HepG2 (cell line): ENCODE measurements at regions of chr3 and their contacts with region 1.

Region 1: GRCh38 chr3:52238761-52239701 is at the start of gene TWF2:
- DNase-seq: peak; percentile 56
- ATAC-seq: peak; percentile 78
- H3K4me3 ChIP-seq: peak within 1 kb of the TSS; percentile 79 to 100 (median 98)
- H3K27ac ChIP-seq: peak within 1 kb of the TSS; percentile 68
- H3K4me1 ChIP-seq: peaks cover 53% of the 10 kb centered on the region
- H3K27me3 ChIP-seq: no peaks in the 10 kb centered on the region; a peak in 1 of 5 replicates
- CTCF ChIP-seq: peak; percentile 59
- EP300 ChIP-seq: no peak
- POLR2A ChIP-seq: no peak; a peak in 1 of 4 replicates
- RAD21 ChIP-seq: no peak
- total RNA-seq, gene TWF2: 45.5 and 49.1 TPM in 2 replicates

Region 2: GRCh38 chr3:52176951-52177700 is 61.9 kb before region 1 on chr3:
- CTCF ChIA-PET with region 1: no interaction called
- POLR2A ChIA-PET with region 1: interaction called, 12 read pairs
- in situ Hi-C with region 1: no loop called
- intact Hi-C with region 1: no loop called
- DNase-seq: peak; percentile 86
- ATAC-seq: peak; percentile 81
- H3K4me3 ChIP-seq: peak overlapping the region; percentile 43 to 60 (median 48); a peak in 5 of 6 replicates
- H3K27ac ChIP-seq: peak overlapping the region; percentile 85
- H3K4me1 ChIP-seq: peaks cover 64% of the 10 kb centered on the region
- H3K27me3 ChIP-seq: no peaks in the 10 kb centered on the region
- CTCF ChIP-seq: no peak; the same call in none of the 2 replicates
- EP300 ChIP-seq: peak; percentile 27 to 48; a peak in 2 of 4 replicates
- POLR2A ChIP-seq: peak; percentile 25 to 50; a peak in 2 of 4 replicates
- RAD21 ChIP-seq: no peak

Region 3: GRCh38 chr3:52220380-52221026 is 18.5 kb before region 1 on chr3:
- CTCF ChIA-PET with region 1: no interaction called
- POLR2A ChIA-PET with region 1: interaction called, 22 read pairs
- in situ Hi-C with region 1: no loop called
- intact Hi-C with region 1: no loop called
- DNase-seq: peak; percentile 49
- ATAC-seq: peak; percentile 78
- H3K4me3 ChIP-seq: peak overlapping the region in 1 of 3 experiments; percentile 6; a peak in 1 of 6 replicates
- H3K27ac ChIP-seq: no peak overlapping the region
- H3K4me1 ChIP-seq: peaks cover 45% of the 10 kb centered on the region
- H3K27me3 ChIP-seq: peaks cover 1 to 12% of the 10 kb centered on the region in 2 experiments; a peak in 4 of 5 replicates
- CTCF ChIP-seq: peak; percentile 94
- EP300 ChIP-seq: no peak
- POLR2A ChIP-seq: no peak
- RAD21 ChIP-seq: peak; percentile 73

Region 4: GRCh38 chr3:52225452-52226228 is 13.4 kb before region 1 on chr3 and contains the start of gene TLR9:
- CTCF ChIA-PET with region 1: no interaction called
- POLR2A ChIA-PET with region 1: interaction called, 22 read pairs
- in situ Hi-C with region 1: no loop called
- intact Hi-C with region 1: no loop called
- DNase-seq: no peak
- ATAC-seq: peak; percentile 41
- H3K4me3 ChIP-seq: no peak within 1 kb of the TSS; a peak in 1 of 6 replicates
- H3K27ac ChIP-seq: no peak within 1 kb of the TSS
- H3K4me1 ChIP-seq: peaks cover 18% of the 10 kb centered on the region
- H3K27me3 ChIP-seq: peaks cover 1 to 12% of the 10 kb centered on the region in 2 experiments; a peak in 4 of 5 replicates
- CTCF ChIP-seq: no peak
- EP300 ChIP-seq: no peak
- POLR2A ChIP-seq: no peak
- RAD21 ChIP-seq: no peak
- total RNA-seq, gene TLR9: not detected in 2 replicates

Region 5: GRCh38 chr3:52299879-52300611 is 61.0 kb after region 1 on chr3:
- CTCF ChIA-PET with region 1: no interaction called
- POLR2A ChIA-PET with region 1: interaction called, 15 read pairs
- in situ Hi-C with region 1: no loop called
- intact Hi-C with region 1: no loop called
- DNase-seq: peak; percentile 65
- ATAC-seq: peak; percentile 60
- H3K4me3 ChIP-seq: peak overlapping the region in 1 of 3 experiments; percentile 45; a peak in 1 of 6 replicates
- H3K27ac ChIP-seq: no peak overlapping the region
- H3K4me1 ChIP-seq: peaks cover 53% of the 10 kb centered on the region
- H3K27me3 ChIP-seq: no peaks in the 10 kb centered on the region
- CTCF ChIP-seq: peak; percentile 41; the same call in 1 of the 2 replicates
- EP300 ChIP-seq: no peak
- POLR2A ChIP-seq: peak in 1 of 2 experiments; percentile 53; a peak in 1 of 4 replicates
- RAD21 ChIP-seq: no peak